GM13976 (cell line): ENCODE measurements at regions of chr11 and their contacts with region 1.

Region 1: GRCh38 chr11:29343465-29344333 is 673.1 kb downstream of the KCNA4 start:
- DNase-seq: peak; percentile 10
- CTCF ChIP-seq: peak; percentile 98

Region 2: DNA sequence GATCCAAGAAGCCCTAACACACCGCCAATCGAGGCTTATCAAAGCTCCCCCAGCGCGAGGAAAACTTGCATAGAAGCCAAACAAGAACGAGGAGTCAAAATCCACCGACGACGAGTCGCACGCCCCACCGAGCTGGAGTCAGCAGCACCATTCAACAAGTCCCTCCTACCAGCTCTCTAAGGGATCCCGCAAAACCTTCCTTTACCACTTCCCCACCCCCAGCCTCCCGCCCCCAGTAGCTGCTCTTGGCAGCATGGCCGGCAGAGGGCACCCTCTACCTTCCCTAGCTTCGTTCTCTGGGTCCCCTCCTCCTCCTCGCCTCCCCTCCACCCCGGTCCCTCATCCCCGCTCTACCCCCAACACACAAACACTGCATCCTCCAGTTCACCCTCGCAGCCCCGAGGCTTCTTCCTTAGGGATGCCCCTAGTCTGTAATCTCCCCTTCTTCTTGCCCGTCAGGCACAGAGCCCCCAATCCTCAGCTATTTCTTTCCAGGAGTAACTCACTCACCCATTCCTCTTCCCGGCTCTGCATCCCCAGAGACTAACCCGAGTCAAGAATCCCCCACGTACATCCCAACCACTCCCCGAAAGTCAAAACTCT is 1644.7 kb before region 1 on chr11:
- in situ Hi-C with region 1: loop called (anchors 25 kb)
- DNase-seq: peak; percentile 79
- CTCF ChIP-seq: peak; percentile 72

Region 3: DNA sequence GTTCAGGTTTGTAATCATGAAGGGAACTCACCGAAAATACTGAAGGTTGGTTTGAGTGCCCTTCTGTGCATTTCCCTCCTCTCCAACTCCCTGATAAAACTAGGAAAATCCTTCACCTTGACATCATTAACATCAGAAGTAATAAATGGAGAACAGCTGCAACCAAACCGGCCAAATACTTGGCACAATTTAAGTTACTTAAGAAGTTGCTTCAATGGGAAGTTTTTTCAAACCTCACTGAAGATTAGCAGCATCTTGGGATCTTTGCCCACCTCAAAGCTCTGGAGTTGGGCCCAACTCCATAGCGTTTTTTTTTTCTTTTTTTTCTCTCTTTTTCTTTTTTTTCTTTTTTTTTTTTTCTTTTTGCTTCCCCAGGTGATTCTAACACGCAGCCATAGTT is 111.7 kb before region 1 on chr11:
- in situ Hi-C with region 1: no loop called
- DNase-seq: no peak
- CTCF ChIP-seq: no peak

Region 4: DNA sequence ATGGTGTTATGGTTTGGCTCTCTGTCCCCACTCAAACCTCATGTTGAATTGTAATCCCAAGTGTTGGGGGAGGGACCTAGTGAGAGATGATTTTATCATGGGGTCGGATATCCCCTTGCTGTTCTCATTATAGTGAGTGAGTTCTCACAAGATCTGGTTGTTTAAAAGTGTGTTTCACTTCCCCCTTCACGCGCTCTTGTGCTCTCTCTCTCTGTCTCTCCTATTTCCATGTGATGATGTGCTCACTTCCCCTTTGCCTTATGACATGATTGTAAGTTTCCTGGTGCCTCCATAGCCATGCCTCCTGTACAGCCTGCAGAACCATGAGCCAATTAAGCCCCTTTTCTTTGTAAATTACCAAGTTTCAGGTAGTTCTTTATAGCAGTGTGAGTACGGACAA is 92.0 kb before region 1 on chr11:
- in situ Hi-C with region 1: no loop called
- DNase-seq: no peak
- CTCF ChIP-seq: no peak